ENCODE measurements at regions of chr11 and their contacts with region 1.

Region 1: GRCh38 chr11:104705490-104706190 is 192.6 kb downstream of the CASP12 start:
- DNase-seq: peak; percentile 87
- ATAC-seq: peak; percentile 94
- H3K4me3 Mint-ChIP-seq: peak overlapping the region; percentile 72
- H3K27ac Mint-ChIP-seq: peak overlapping the region; percentile 96
- H3K4me1 Mint-ChIP-seq: peaks cover 54% of the 10 kb centered on the region
- H3K27me3 Mint-ChIP-seq: no peaks in the 10 kb centered on the region
- CTCF ChIP-seq: no peak

Region 2: GRCh38 chr11:104657083-104657482 is 48.6 kb before region 1 on chr11:
- CTCF ChIA-PET with region 1: no interaction called
- POLR2A ChIA-PET with region 1: no interaction called
- intact Hi-C with region 1: loop called (anchors 5 kb)
- DNase-seq: no peak
- ATAC-seq: peak; percentile 90
- H3K4me3 Mint-ChIP-seq: no peak overlapping the region
- H3K27ac Mint-ChIP-seq: no peak overlapping the region
- H3K4me1 Mint-ChIP-seq: peaks cover 32% of the 10 kb centered on the region
- H3K27me3 Mint-ChIP-seq: no peaks in the 10 kb centered on the region
- CTCF ChIP-seq: no peak

Region 3: DNA sequence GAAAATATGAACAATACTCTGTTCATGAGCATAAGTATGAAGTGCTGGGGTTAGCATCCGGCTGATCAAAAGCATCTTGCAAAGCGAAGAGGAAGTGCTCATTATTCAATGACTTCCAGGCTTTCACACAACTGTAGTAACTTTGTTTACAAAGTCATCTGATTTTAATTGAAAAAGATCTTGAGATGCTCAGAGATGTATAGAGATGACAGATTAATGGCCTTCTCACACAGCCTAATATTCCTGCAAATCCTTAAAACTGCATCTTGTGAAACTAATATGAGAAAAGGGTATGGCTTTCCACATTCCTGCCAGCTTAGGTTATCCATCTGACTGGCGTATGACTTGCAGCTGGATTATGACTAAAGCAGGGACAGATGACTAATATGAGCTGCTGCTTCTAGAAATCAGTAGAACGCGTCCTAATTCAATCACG is 67.2 kb after region 1 on chr11:
- CTCF ChIA-PET with region 1: no interaction called
- POLR2A ChIA-PET with region 1: no interaction called
- intact Hi-C with region 1: no loop called
- DNase-seq: no peak
- ATAC-seq: peak; percentile 30
- H3K4me3 Mint-ChIP-seq: no peak overlapping the region
- H3K27ac Mint-ChIP-seq: no peak overlapping the region
- H3K4me1 Mint-ChIP-seq: peaks cover 20% of the 10 kb centered on the region
- H3K27me3 Mint-ChIP-seq: no peaks in the 10 kb centered on the region
- CTCF ChIP-seq: no peak

Region 4: DNA sequence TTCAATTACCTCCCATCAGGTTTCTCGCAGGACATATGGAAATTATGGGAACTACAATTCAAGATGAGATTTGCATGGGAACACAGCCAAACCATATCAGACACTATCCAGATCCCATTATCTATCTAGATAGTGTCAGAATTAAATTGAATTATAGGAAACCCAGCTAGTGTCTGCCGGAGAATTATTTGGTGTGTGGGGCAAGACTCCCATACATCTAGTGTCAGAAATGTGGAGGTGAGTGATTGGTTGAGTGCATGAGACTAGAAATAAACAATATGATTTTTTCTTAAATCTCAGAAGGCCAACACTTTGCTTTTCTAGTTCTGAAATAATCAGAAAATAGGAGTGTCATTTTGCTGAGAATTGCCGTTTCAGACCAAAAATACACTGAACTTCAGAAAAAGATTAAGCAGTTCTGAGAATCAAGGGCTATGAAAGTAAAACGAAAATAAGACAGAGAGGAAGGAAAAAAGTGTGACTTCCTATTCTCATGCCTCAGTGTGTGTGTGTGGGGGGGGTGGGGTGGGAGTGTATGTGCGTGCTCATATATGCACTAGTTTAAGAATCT is 171.3 kb after region 1 on chr11:
- CTCF ChIA-PET with region 1: no interaction called
- POLR2A ChIA-PET with region 1: no interaction called
- intact Hi-C with region 1: loop called (anchors 10 kb)
- DNase-seq: peak; percentile 12
- ATAC-seq: peak; percentile 86
- H3K4me3 Mint-ChIP-seq: peak overlapping the region; percentile 14
- H3K27ac Mint-ChIP-seq: peak overlapping the region; percentile 84
- H3K4me1 Mint-ChIP-seq: peaks cover 38% of the 10 kb centered on the region
- H3K27me3 Mint-ChIP-seq: no peaks in the 10 kb centered on the region
- CTCF ChIP-seq: no peak

Measured in activated CD8-positive, alpha-beta T cell treated with anti-CD3 and anti-CD28 coated beads for 36 hours (primary cell).